ENCODE measurements at regions of chr11 and their contacts with region 1.

Region 1: GRCh38 chr11:27485930-27486773 is 13.6 kb upstream of the LGR4 start:
- DNase-seq: peak in 4 of 5 donors; percentile 40 to 58 (median 51)
- H3K4me3 ChIP-seq: no peak overlapping the region
- H3K4me3 Mint-ChIP-seq: no peak overlapping the region
- H3K27ac ChIP-seq: no peak overlapping the region
- H3K27ac Mint-ChIP-seq: no peak overlapping the region
- H3K4me1 ChIP-seq: no peaks in the 10 kb centered on the region
- H3K4me1 Mint-ChIP-seq: peaks cover 0 to 4% (median under 1%) of the 10 kb centered on the region in 4 donors
- H3K27me3 ChIP-seq: no peaks in the 10 kb centered on the region
- H3K27me3 Mint-ChIP-seq: no peaks in the 10 kb centered on the region

Region 2: GRCh38 chr11:26283852-26284408 is 1202.2 kb before region 1 on chr11:
- CTCF ChIA-PET with region 1: interaction called, 15 read pairs
- POLR2A ChIA-PET with region 1: no interaction called
- intact Hi-C with region 1: loop called (anchors 2 kb)
- DNase-seq: peak in 1 of 5 donors; percentile 25
- H3K4me3 ChIP-seq: no peak overlapping the region
- H3K4me3 Mint-ChIP-seq: peak overlapping the region in 7 of 8 donors; percentile 29 to 73 (median 71)
- H3K27ac ChIP-seq: no peak overlapping the region
- H3K27ac Mint-ChIP-seq: peak overlapping the region in 1 of 7 donors; percentile 53
- H3K4me1 ChIP-seq: no peaks in the 10 kb centered on the region
- H3K4me1 Mint-ChIP-seq: peaks cover 5 to 10% (median 7%) of the 10 kb centered on the region in 4 donors
- H3K27me3 ChIP-seq: no peaks in the 10 kb centered on the region
- H3K27me3 Mint-ChIP-seq: peaks cover 0 to 7% of the 10 kb centered on the region in 2 donors

Region 3: DNA sequence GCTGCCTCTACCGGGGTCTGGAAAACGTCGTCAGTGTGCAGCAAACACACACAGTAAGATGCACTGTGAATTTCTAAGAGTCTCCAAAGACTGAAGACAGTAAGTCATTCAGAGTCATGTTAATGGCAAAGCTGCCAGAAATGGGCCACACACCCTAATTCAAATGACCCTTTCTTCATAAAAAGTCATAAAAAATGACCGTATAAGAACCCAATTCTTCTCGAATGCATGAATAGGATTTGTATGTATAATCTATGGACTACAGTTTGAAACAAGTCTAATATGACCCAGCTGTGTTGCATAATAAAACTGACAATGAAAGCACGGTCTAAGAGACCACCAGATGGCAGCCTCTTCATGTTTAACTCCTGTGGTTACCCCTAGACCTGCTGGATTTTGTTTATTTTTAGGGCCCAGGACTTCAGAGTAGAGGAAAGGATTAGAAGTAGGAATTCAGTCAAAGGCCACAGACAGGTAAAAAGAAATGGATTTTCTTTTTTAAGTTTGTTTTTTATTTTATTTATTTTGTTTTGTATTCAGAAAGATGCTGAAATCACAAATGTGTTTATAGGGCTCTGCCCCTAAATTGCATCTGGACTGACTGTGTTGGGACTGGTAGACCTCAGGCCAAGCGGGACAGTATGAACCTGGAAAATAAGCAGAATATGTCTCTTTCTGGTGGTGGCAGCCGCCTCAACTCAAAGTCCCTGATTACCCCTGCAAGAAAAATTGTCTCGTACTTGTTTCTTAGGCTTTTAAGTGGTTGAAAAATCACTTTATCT is 732.2 kb before region 1 on chr11:
- CTCF ChIA-PET with region 1: no interaction called
- POLR2A ChIA-PET with region 1: no interaction called
- intact Hi-C with region 1: loop called (anchors 5 kb)
- DNase-seq: no peak
- H3K4me3 ChIP-seq: no peak overlapping the region
- H3K4me3 Mint-ChIP-seq: no peak overlapping the region
- H3K27ac ChIP-seq: no peak overlapping the region
- H3K27ac Mint-ChIP-seq: no peak overlapping the region
- H3K4me1 ChIP-seq: no peaks in the 10 kb centered on the region
- H3K4me1 Mint-ChIP-seq: no peaks in the 10 kb centered on the region
- H3K27me3 ChIP-seq: no peaks in the 10 kb centered on the region
- H3K27me3 Mint-ChIP-seq: no peaks in the 10 kb centered on the region

Region 4: GRCh38 chr11:27183672-27184457 is 302.3 kb before region 1 on chr11:
- CTCF ChIA-PET with region 1: interaction called, 100 read pairs
- POLR2A ChIA-PET with region 1: no interaction called
- intact Hi-C with region 1: no loop called
- DNase-seq: peak in 4 of 5 donors; percentile 15 to 31 (median 24)
- H3K4me3 ChIP-seq: no peak overlapping the region
- H3K4me3 Mint-ChIP-seq: no peak overlapping the region
- H3K27ac ChIP-seq: no peak overlapping the region
- H3K27ac Mint-ChIP-seq: peak overlapping the region in 1 of 7 donors; percentile 43
- H3K4me1 ChIP-seq: no peaks in the 10 kb centered on the region
- H3K4me1 Mint-ChIP-seq: peaks cover 0 to 1% (median 0%) of the 10 kb centered on the region in 4 donors
- H3K27me3 ChIP-seq: no peaks in the 10 kb centered on the region
- H3K27me3 Mint-ChIP-seq: peaks cover 2 to 7% of the 10 kb centered on the region in 2 donors

Region 5: GRCh38 chr11:27296497-27296896 is 189.7 kb before region 1 on chr11:
- CTCF ChIA-PET with region 1: no interaction called
- POLR2A ChIA-PET with region 1: no interaction called
- intact Hi-C with region 1: loop called (anchors 1 kb)
- DNase-seq: no peak
- H3K4me3 ChIP-seq: no peak overlapping the region
- H3K4me3 Mint-ChIP-seq: no peak overlapping the region
- H3K27ac ChIP-seq: no peak overlapping the region
- H3K27ac Mint-ChIP-seq: no peak overlapping the region
- H3K4me1 ChIP-seq: no peaks in the 10 kb centered on the region
- H3K4me1 Mint-ChIP-seq: no peaks in the 10 kb centered on the region
- H3K27me3 ChIP-seq: no peaks in the 10 kb centered on the region
- H3K27me3 Mint-ChIP-seq: peaks cover 2 to 4% of the 10 kb centered on the region in 2 donors

Region 6: GRCh38 chr11:27472398-27473016 is 13.6 kb before region 1 on chr11 and contains the start of gene LGR4:
- CTCF ChIA-PET with region 1: interaction called, 12 read pairs
- POLR2A ChIA-PET with region 1: interaction called, 3 read pairs
- intact Hi-C with region 1: no loop called
- DNase-seq: peak; percentile 68 to 81 (median 70)
- H3K4me3 ChIP-seq: peak within 1 kb of the TSS; percentile 27 to 65
- H3K4me3 Mint-ChIP-seq: peak within 1 kb of the TSS; percentile 94 to 99 (median 95)
- H3K27ac ChIP-seq: no peak within 1 kb of the TSS
- H3K27ac Mint-ChIP-seq: peak within 1 kb of the TSS; percentile 1 to 93 (median 81)
- H3K4me1 ChIP-seq: peaks cover 13% of the 10 kb centered on the region
- H3K4me1 Mint-ChIP-seq: peaks cover 11 to 27% (median 18%) of the 10 kb centered on the region in 4 donors
- H3K27me3 ChIP-seq: no peaks in the 10 kb centered on the region
- H3K27me3 Mint-ChIP-seq: peaks cover 3 to 12% of the 10 kb centered on the region in 2 donors
- total RNA-seq, gene LGR4: 0.58 to 1.6 TPM

Region 7: GRCh38 chr11:27497284-27497866 is 11.2 kb after region 1 on chr11:
- CTCF ChIA-PET with region 1: interaction called, 116 read pairs
- POLR2A ChIA-PET with region 1: interaction called, 3 read pairs
- intact Hi-C with region 1: no loop called
- DNase-seq: peak in 3 of 5 donors; percentile 12 to 22 (median 16)
- H3K4me3 ChIP-seq: no peak overlapping the region
- H3K4me3 Mint-ChIP-seq: no peak overlapping the region
- H3K27ac ChIP-seq: no peak overlapping the region
- H3K27ac Mint-ChIP-seq: peak overlapping the region in 2 of 7 donors; percentile 42 to 48
- H3K4me1 ChIP-seq: peaks cover 22% of the 10 kb centered on the region
- H3K4me1 Mint-ChIP-seq: peaks cover 10 to 27% (median 13%) of the 10 kb centered on the region in 4 donors
- H3K27me3 ChIP-seq: no peaks in the 10 kb centered on the region
- H3K27me3 Mint-ChIP-seq: no peaks in the 10 kb centered on the region

Region 8: GRCh38 chr11:27672836-27673464 is 186.8 kb after region 1 on chr11:
- CTCF ChIA-PET with region 1: no interaction called
- POLR2A ChIA-PET with region 1: no interaction called
- intact Hi-C with region 1: no loop called
- DNase-seq: no peak
- H3K4me3 ChIP-seq: no peak overlapping the region
- H3K4me3 Mint-ChIP-seq: no peak overlapping the region
- H3K27ac ChIP-seq: no peak overlapping the region
- H3K27ac Mint-ChIP-seq: no peak overlapping the region
- H3K4me1 ChIP-seq: no peaks in the 10 kb centered on the region
- H3K4me1 Mint-ChIP-seq: no peaks in the 10 kb centered on the region
- H3K27me3 ChIP-seq: no peaks in the 10 kb centered on the region
- H3K27me3 Mint-ChIP-seq: no peaks in the 10 kb centered on the region